Activated CD4-positive, alpha-beta T cell treated with anti-CD3 and anti-CD28 coated beads, Interleukin-2, amount 10 ng/mL, durations not matched to agents 7 days and 5 days (primary cell): ENCODE measurements at regions of chr11 and their contacts with region 1.

Region 1: DNA sequence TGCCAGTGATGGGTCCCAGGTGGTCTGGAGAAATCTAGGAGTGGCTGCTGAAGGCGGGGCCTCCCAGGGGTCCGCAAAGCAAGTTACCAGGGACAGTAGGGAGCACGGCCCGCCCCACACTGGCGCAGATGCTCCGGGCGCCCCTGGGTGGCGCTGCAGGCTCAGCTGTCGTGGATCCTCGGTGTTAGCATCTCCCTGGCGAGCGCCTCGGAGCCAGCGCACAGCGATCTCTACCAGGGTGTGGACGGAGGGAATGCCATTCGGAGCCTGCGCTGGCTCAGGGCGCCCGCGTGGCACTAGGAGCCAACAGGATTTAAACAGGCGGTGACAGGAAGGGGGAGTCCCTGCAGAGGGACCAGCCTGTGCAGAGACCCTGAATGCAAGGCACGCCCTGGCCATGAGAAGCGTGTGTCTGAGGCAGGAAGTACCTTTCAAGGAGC is 20.2 kb downstream of the FADS3 start:
- DNase-seq: peak; percentile 63
- H3K4me3 Mint-ChIP-seq: peak overlapping the region; percentile 62
- H3K27ac Mint-ChIP-seq: no peak overlapping the region
- H3K4me1 Mint-ChIP-seq: peaks cover 5% of the 10 kb centered on the region
- H3K27me3 Mint-ChIP-seq: peaks cover 2% of the 10 kb centered on the region

Region 2: GRCh38 chr11:61885166-61885778 is 14.1 kb after region 1 on chr11:
- CTCF ChIA-PET with region 1: interaction called, 41 read pairs
- POLR2A ChIA-PET with region 1: no interaction called
- DNase-seq: no peak
- H3K4me3 Mint-ChIP-seq: no peak overlapping the region
- H3K27ac Mint-ChIP-seq: no peak overlapping the region
- H3K4me1 Mint-ChIP-seq: no peaks in the 10 kb centered on the region
- H3K27me3 Mint-ChIP-seq: peaks cover 4% of the 10 kb centered on the region

Region 3: DNA sequence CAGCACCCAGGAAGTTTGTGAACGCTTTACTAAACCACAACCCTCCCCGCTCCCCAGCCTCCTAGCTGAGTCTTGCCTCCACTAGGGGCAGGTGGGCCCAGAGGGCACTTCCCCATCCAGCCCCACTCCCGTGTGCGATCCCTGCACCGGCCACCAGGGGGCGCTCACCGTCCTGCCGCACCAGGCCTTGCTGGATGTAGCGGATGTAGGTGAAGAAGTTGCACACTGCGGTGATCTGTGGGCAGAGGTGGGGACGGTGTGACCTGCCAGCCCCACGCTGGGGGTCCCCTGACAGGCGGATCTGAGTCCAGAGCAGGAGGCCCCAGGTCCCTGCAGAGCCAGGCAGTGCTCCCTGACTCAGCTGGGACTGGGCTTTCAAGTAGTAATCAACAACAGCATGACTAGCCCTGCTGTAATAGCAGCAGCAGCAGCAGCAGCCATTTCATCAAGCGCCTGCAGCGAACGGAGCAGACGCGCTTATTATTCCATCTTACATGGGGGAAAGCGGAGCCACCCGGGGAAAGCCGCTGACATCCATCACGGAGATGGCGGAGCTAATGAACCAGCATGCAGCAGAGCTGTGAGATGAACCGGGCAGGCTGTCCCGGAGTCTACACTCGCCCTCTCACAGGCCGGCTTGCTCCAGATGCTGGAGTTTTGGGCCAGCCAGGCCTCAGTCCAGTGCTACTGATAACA is 28.1 kb after region 1 on chr11:
- CTCF ChIA-PET with region 1: interaction called, 11 read pairs
- POLR2A ChIA-PET with region 1: no interaction called
- DNase-seq: peak; percentile 92
- H3K4me3 Mint-ChIP-seq: no peak overlapping the region
- H3K27ac Mint-ChIP-seq: peak overlapping the region; percentile 43
- H3K4me1 Mint-ChIP-seq: peaks cover 6% of the 10 kb centered on the region
- H3K27me3 Mint-ChIP-seq: no peaks in the 10 kb centered on the region